ENCODE measurements at regions of chr9 and their contacts with region 1.

Region 1: DNA sequence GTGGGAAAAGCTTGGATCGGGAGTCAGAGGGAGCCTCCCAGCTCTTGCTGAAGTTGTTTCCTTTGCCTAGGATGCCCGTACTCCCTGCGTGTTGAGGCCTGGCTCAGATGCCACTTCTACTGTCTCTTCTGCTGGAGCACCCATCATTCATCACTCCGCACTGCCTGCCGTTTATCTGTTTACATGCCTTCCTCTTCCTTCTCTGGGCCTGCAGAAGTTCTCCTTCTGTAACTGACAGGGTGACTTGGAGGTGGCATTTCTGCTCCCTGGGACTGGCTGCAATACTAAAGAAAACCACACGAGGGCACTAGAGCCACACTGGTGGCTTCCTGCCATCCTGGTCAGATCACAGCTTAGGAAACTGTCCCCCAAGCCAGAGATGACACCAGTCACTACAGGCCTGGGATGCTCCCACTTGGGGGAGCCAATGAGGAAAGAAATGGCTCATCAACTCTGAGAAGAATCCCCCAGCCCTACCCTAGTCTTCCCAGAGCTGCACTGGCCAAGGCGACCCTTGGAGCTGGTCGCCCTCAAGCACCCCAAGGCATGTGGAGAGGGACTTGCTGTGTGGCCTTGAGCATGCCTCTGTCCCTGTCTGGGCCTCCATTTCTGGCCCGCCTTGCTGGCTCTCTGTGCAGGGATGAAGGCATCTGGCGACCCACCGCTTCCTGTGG is 9.7 kb upstream of the SLC25A51 start:
- DNase-seq: peak; percentile 90
- H3K4me3 ChIP-seq: no peak overlapping the region; a peak in 1 of 4 replicates
- H3K27ac ChIP-seq: peak overlapping the region; percentile 30 to 48; a peak in 3 of 4 replicates
- H3K4me1 ChIP-seq: peaks cover 5 to 7% of the 10 kb centered on the region in 2 experiments; a peak in 1 of 4 replicates
- H3K27me3 ChIP-seq: no peaks in the 10 kb centered on the region
- CTCF ChIP-seq: peak; percentile 97
- EP300 ChIP-seq: no peak
- RAD21 ChIP-seq: peak; percentile 100

Region 2: DNA sequence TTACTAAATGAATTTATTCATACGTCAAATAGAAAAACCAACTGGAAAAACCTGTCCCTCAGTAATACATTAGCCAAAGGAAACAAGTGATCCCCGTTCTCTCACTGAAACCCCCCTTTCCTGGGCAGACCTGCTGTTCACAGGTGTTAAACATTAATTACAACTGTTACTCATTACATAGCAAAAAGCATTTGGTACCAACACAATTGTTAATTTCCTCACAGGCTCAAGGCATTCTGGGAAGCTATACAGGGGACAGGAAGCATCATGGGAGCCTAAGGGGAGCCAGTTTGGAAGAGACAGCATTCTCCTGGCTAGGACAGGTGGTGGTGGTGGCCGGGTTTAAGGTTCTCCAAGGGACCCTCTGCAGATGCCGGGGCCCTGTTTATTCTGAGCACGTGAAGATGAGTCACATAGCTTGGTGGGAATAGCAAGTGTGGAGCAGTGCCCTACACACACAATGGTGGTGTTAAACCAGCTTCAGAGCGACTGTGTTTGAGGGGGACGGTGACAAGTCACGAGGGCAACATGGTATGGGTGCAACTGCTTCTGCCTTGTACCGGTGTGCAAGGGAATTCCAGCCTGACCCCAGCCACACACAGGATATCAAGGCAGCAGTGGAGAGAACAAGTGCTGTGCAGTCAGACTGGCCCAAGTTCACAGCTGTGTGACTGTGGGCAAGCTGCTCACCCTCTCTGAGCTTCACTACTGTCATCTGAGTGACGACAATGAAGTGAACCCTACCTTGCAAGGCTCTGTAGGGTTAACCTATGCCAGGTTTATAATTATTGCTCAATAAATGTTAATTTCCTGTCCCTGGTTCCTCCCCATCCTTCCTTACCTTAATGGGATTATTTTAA is 53.0 kb after region 1 on chr9:
- CTCF ChIA-PET with region 1: interaction called, 15 read pairs
- POLR2A ChIA-PET with region 1: no interaction called
- DNase-seq: no peak
- H3K4me3 ChIP-seq: no peak overlapping the region
- H3K27ac ChIP-seq: peak overlapping the region in 1 of 2 experiments; percentile 96; a peak in 3 of 4 replicates
- H3K4me1 ChIP-seq: peaks cover 44 to 49% of the 10 kb centered on the region in 2 experiments; a peak in 3 of 4 replicates
- H3K27me3 ChIP-seq: no peaks in the 10 kb centered on the region
- CTCF ChIP-seq: no peak
- EP300 ChIP-seq: no peak
- RAD21 ChIP-seq: no peak

Region 3: DNA sequence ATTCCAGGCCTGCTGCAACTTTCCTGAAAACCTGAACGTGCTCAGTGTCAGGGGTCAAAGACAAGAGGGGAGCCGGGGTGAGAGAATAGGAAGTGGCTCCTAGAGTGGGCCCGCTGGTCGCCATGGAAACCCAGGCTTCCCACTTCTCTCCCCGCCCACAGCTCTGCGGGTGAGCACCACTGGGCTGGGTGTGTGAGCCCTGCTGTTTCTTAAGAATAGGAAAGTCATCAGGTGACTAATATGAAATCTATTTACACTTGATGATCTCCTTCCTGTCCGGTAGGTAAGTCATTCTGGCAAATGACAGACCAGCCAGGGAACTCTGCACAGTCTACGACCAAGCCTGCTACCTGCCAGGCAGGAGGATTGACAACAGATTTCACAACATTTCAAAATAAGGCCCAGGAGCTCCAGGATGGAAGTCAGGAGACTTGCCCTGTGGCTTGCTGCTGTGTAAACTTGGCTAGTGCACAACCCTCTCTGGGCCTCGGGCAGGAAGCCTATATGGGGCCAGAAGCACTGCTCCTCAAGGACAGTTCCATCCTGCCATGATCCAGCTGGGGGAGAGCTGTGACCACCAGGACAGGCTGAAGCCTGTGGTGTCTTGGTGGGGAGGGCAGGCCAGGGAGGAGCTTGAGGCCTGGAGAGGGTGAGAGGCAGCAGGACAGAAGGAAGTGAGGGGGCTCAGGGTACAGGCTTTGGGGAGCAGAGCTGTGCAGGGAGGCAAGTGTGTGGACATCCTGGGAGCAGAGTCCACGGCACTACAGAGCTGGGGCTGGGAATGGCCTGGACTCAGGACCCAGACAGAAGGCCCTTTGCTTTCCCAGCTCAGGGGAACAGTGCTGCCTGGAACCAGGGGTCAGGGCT is 94.8 kb after region 1 on chr9:
- CTCF ChIA-PET with region 1: interaction called, 12 read pairs
- POLR2A ChIA-PET with region 1: no interaction called
- DNase-seq: no peak
- H3K4me3 ChIP-seq: no peak overlapping the region; a peak in 1 of 4 replicates
- H3K27ac ChIP-seq: peak overlapping the region; percentile 11 to 93; a peak in 3 of 4 replicates
- H3K4me1 ChIP-seq: peaks cover 27 to 39% of the 10 kb centered on the region in 2 experiments; a peak in 3 of 4 replicates
- H3K27me3 ChIP-seq: no peaks in the 10 kb centered on the region
- CTCF ChIP-seq: no peak
- EP300 ChIP-seq: peak in 1 of 2 experiments; percentile 69; a peak in 1 of 4 replicates
- RAD21 ChIP-seq: no peak

Region 4: GRCh38 chr9:38061326-38061977 is 147.8 kb after region 1 on chr9:
- CTCF ChIA-PET with region 1: interaction called, 24 read pairs
- POLR2A ChIA-PET with region 1: no interaction called
- DNase-seq: no peak
- H3K4me3 ChIP-seq: no peak overlapping the region
- H3K27ac ChIP-seq: peak overlapping the region; percentile 9 to 67; a peak in 2 of 4 replicates
- H3K4me1 ChIP-seq: peaks cover 64 to 68% of the 10 kb centered on the region in 2 experiments; a peak in 3 of 4 replicates
- H3K27me3 ChIP-seq: no peaks in the 10 kb centered on the region
- CTCF ChIP-seq: no peak
- EP300 ChIP-seq: no peak
- RAD21 ChIP-seq: no peak

Region 5: GRCh38 chr9:38160613-38161215 is 247.1 kb after region 1 on chr9:
- CTCF ChIA-PET with region 1: interaction called, 15 read pairs
- POLR2A ChIA-PET with region 1: no interaction called
- DNase-seq: peak; percentile 52
- H3K4me3 ChIP-seq: peak overlapping the region in 1 of 2 experiments; percentile 21; a peak in 1 of 4 replicates
- H3K27ac ChIP-seq: no peak overlapping the region
- H3K4me1 ChIP-seq: peaks cover 0 to 13% of the 10 kb centered on the region in 2 experiments; a peak in 1 of 4 replicates
- H3K27me3 ChIP-seq: no peaks in the 10 kb centered on the region; the same call in 1 of the 2 replicates
- CTCF ChIP-seq: peak; percentile 90
- EP300 ChIP-seq: no peak
- RAD21 ChIP-seq: peak; percentile 66

Region 6: DNA sequence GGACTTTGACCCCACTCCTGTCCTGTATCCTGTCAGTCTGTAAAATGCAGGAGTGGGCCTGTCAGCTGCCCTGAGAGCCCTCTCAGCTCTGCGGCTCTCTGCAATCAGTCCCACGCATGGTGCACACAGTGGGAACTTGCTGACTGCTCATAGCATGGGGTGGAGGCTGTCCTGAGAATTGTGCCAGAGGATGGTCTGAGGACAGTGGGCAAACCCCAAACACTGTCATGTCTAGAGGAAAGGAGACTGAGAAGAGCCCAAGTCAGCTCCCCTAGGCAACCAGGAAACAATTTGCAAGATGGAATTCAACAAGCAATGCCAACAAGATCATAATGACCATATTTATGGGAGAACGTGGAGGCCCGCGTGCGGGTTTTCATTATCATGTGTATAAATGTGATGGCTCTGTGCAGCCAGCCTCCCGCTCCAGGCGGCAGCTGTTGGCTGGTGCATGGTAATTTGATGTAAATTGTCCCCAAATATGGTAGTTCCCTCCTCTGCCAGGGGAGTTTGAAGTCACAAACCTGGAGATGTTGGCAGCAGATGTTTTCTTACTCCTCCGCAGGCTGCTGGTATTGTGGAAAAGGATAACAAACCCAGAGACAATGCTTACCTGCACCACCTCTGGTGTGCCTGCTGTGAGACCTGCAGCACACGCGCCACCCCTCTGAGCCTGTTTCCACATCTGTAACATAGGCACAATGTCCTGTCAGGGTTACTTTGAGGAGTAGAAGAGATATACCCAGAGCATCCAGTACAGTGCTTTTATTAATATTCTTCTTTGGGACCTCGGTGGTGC is 439.1 kb after region 1 on chr9:
- CTCF ChIA-PET with region 1: interaction called, 124 read pairs
- POLR2A ChIA-PET with region 1: no interaction called
- DNase-seq: no peak
- H3K4me3 ChIP-seq: no peak overlapping the region
- H3K27ac ChIP-seq: no peak overlapping the region
- H3K4me1 ChIP-seq: peaks cover 0 to 9% of the 10 kb centered on the region in 2 experiments; a peak in 1 of 4 replicates
- H3K27me3 ChIP-seq: no peaks in the 10 kb centered on the region; the same call in 1 of the 2 replicates
- CTCF ChIP-seq: no peak
- EP300 ChIP-seq: no peak
- RAD21 ChIP-seq: no peak